Mammary epithelial cell (primary cell): ENCODE measurements at regions of chr14 and their contacts with region 1.

Region 1: DNA sequence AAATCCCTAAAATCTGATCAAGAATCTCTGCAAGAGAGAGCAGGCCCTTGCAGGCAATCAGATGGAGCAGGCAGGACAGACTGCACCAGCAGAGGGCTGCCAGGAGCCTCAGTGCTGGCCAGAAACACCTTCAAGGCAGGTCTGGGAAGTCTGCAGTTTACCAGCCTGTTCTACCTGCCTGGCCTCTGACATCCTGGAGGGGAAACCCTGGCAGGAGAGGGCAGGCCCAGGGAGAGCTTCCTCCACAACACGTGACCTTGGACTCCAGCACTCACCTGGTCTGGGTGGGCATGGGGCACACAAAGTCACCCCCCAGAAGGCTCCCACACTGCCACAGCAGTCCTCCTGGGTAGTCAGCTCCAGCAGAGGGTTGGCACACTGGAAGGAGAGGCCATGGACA is 56.0 kb downstream of the ISCA2 start:
- DNase-seq: peak; percentile 36
- H3K4me3 ChIP-seq: no peak overlapping the region
- H3K27ac ChIP-seq: no peak overlapping the region
- H3K4me1 ChIP-seq: peaks cover 4% of the 10 kb centered on the region
- H3K27me3 ChIP-seq: no peaks in the 10 kb centered on the region
- CTCF ChIP-seq: peak; percentile 38 to 90

Region 2: GRCh38 chr14:74392616-74393570 is 156.7 kb before region 1 on chr14:
- CTCF ChIA-PET with region 1: no interaction called
- dilution Hi-C with region 1: no loop called
- in situ Hi-C with region 1: no loop called
- intact Hi-C with region 1: no loop called
- DNase-seq: no peak
- H3K4me3 ChIP-seq: no peak overlapping the region
- H3K27ac ChIP-seq: no peak overlapping the region
- H3K4me1 ChIP-seq: no peaks in the 10 kb centered on the region
- H3K27me3 ChIP-seq: peaks cover 3% of the 10 kb centered on the region
- CTCF ChIP-seq: no peak

Region 3: DNA sequence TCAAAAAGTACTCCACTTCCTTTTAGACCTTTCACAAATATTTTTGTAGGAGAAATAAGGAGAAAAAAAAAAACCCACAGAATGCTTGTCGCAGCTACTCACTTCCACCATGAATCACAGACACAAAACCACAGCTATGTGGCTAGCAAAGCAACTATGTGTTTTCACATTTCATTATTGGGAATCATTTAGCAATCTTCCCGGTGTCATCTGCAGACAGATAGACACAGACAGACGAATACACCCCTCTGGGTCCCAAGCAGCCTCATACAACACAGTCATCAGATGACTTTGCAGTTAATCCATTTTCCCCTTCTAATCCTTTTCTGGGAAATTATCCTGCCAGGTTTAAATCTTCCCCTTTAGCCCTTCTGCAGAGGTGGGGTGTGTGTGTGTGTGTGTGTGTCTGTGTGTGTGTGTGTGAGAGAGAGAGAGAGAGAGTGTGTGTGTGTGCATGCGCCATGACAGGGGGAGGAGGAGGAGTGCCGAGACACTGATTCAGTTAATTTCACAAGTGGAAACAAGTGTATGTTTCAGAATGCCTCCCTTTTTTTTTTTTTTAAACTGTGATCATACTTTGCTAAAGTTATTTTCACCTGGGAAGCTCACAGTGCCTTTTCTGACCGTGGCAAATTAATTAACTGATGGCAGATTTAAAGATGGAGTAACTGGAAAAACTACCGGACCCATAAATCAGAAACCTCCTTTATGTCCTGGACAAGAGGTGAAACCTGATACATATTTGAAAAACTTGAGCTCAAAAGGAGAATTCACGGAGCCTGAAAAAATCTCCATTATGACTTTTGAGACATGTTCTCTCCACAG is 22.5 kb after region 1 on chr14:
- CTCF ChIA-PET with region 1: no interaction called
- dilution Hi-C with region 1: no loop called
- in situ Hi-C with region 1: no loop called
- intact Hi-C with region 1: loop called (anchors 1 kb)
- DNase-seq: peak; percentile 99
- H3K4me3 ChIP-seq: peak overlapping the region; percentile 24 to 37 (median 30)
- H3K27ac ChIP-seq: peak overlapping the region; percentile 98
- H3K4me1 ChIP-seq: peaks cover 85% of the 10 kb centered on the region
- H3K27me3 ChIP-seq: no peaks in the 10 kb centered on the region
- CTCF ChIP-seq: no peak

Region 4: GRCh38 chr14:74593241-74593953 is 43.8 kb after region 1 on chr14:
- CTCF ChIA-PET with region 1: no interaction called
- dilution Hi-C with region 1: no loop called
- in situ Hi-C with region 1: no loop called
- intact Hi-C with region 1: loop called (anchors 1 kb)
- DNase-seq: no peak
- H3K4me3 ChIP-seq: no peak overlapping the region
- H3K27ac ChIP-seq: no peak overlapping the region
- H3K4me1 ChIP-seq: peaks cover 34% of the 10 kb centered on the region
- H3K27me3 ChIP-seq: no peaks in the 10 kb centered on the region
- CTCF ChIP-seq: no peak

Region 5: GRCh38 chr14:74653386-74654138 is 104.0 kb after region 1 on chr14:
- CTCF ChIA-PET with region 1: no interaction called
- dilution Hi-C with region 1: loop called (anchors 5 kb)
- in situ Hi-C with region 1: no loop called
- intact Hi-C with region 1: no loop called
- DNase-seq: no peak
- H3K4me3 ChIP-seq: no peak overlapping the region
- H3K27ac ChIP-seq: no peak overlapping the region
- H3K4me1 ChIP-seq: peaks cover 81% of the 10 kb centered on the region
- H3K27me3 ChIP-seq: no peaks in the 10 kb centered on the region
- CTCF ChIP-seq: no peak